ENCODE measurements at regions of chr1 and their contacts with region 1.

Region 1: GRCh38 chr1:212062832-212063438 is 27.4 kb downstream of the DTL start:
- DNase-seq: no peak
- H3K4me3 ChIP-seq: no peak overlapping the region
- H3K27ac ChIP-seq: no peak overlapping the region
- H3K4me1 ChIP-seq: no peaks in the 10 kb centered on the region
- H3K27me3 ChIP-seq: no peaks in the 10 kb centered on the region
- CTCF ChIP-seq: peak in 5 of 6 experiments; percentile 51 to 73 (median 69)
- POLR2A ChIP-seq: no peak

Region 2: DNA sequence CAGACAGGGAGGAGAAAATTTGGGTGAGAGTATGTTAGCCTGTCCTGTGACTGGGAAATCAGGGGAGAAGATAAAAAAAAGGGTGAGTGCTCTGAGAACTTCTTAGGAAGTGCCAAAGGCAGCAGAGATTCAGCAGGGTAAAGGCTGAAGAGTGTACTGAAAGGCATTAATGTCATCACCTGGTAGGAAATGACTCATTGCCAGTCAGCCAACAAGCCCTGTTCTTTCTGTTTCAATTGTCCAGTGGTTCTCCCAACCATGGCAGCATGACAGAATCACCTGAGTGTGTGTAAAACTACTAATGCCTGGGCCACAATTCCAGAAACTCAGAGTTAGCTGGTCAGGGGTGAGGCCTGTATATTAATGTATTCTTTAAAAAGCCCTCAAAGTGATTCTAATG is 111.1 kb before region 1 on chr1:
- intact Hi-C with region 1: no loop called
- DNase-seq: no peak
- H3K4me3 ChIP-seq: no peak overlapping the region
- H3K27ac ChIP-seq: peak overlapping the region in 3 of 4 donors; percentile 40 to 48 (median 44)
- H3K4me1 ChIP-seq: peaks cover 0 to 8% (median 0%) of the 10 kb centered on the region in 3 donors
- H3K27me3 ChIP-seq: no peaks in the 10 kb centered on the region
- CTCF ChIP-seq: no peak
- POLR2A ChIP-seq: no peak

Region 3: GRCh38 chr1:212455803-212456528 is 393.0 kb after region 1 on chr1:
- intact Hi-C with region 1: loop called (anchors 10 kb)
- DNase-seq: no peak
- H3K4me3 ChIP-seq: peak overlapping the region in 3 of 4 donors; percentile 15 to 28 (median 19)
- H3K27ac ChIP-seq: peak overlapping the region in 3 of 4 donors; percentile 59 to 76 (median 71)
- H3K4me1 ChIP-seq: peaks cover 0 to 26% (median 18%) of the 10 kb centered on the region in 3 donors
- H3K27me3 ChIP-seq: no peaks in the 10 kb centered on the region
- CTCF ChIP-seq: peak; percentile 93 to 100 (median 97)
- POLR2A ChIP-seq: no peak

Measured in esophagus squamous epithelium (tissue), 5 donors.